Endothelial cell of umbilical vein (primary cell): ENCODE measurements at regions of chr14 and their contacts with region 1.

Region 1: DNA sequence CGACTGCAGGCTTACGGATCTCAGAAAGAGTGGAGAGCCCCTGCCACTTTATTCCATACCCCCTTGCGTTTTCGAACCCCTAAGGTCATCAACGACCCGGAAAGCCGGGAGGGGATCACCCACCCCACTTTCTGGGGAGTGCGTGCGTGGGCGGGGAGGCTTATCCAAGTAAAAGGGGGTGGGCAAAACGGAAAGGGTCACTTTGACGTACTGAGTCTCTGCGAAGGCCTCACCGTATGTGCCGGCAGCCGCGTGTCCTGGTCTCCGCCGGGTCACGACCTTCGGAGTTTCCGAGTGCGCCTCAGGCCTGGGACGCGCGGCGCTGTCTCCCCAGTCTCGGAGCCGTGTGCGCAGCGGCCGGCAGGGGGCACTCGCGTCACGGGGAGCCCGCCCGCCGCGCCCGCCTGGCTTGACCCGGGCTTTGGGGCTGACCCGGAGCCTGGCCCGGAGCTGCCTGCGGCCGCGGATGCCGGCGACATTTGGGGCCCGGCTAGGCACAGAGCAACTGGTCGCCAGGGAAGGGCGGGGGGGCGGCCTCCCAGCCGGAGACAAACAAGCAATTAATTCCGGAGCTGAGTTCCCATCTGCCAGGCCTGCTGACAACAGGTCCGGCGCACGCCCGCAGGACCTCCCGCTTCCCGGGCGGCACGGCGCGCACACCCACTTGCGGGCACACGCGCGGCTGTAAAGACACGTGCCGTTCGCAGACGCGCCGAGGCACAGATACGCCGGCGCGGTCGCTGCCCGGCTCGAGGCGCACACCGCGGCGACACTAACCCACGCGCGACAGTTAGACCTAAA is 890 bp upstream of the KIF26A start:
- DNase-seq: peak; percentile 51
- H3K4me3 ChIP-seq: peak overlapping the region; percentile 48 to 87 (median 61)
- H3K27ac ChIP-seq: no peak overlapping the region
- H3K4me1 ChIP-seq: peaks cover 21% of the 10 kb centered on the region
- H3K27me3 ChIP-seq: peaks cover 21 to 23% of the 10 kb centered on the region in 2 experiments
- CTCF ChIP-seq: peak; percentile 79 to 84
- POLR2A ChIP-seq: no peak

Region 2: GRCh38 chr14:103905842-103906456 is 231.5 kb before region 1 on chr14:
- CTCF ChIA-PET with region 1: no interaction called
- POLR2A ChIA-PET with region 1: no interaction called
- dilution Hi-C with region 1: no loop called
- intact Hi-C with region 1: no loop called
- DNase-seq: peak; percentile 15
- H3K4me3 ChIP-seq: no peak overlapping the region
- H3K27ac ChIP-seq: no peak overlapping the region
- H3K4me1 ChIP-seq: peaks cover 9% of the 10 kb centered on the region
- H3K27me3 ChIP-seq: no peaks in the 10 kb centered on the region
- CTCF ChIP-seq: peak; percentile 30 to 60
- POLR2A ChIP-seq: no peak

Region 3: DNA sequence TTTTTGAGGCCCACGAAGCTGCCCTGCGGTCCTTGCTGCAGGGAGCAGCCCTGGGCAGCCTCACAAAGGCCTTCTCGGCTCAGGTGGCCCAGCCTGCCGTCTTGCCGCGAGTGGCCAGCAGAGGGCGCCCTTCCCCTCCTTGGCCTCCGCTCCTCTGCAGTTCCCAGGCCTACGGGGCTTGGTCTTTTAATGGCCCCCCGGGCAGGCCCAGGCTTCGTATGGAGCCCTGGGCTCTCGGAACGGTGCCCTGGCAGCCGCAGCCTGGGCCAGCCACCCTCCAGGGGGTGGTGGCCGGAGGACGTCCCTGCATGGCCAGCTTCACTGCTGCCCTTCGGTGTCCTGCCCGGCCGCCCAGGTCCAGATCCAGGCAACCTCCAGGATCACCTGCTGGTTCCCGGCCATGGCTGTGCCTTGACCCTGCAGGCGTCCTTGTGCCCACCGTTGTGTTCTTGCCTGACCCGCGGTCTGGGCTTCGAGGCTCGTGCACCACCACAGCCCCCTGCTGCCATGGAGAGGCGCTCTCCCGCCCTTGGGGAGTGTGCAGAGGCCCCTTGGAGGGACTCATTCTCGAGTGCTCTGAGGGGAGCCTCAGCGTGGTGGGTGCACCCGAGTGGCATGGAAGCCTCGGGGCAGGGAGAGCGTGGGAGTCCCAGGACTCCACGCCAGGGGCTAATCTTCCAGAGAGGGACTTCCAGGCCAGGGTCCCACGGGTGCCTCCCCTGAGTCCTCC is 42.6 kb before region 1 on chr14:
- CTCF ChIA-PET with region 1: no interaction called
- POLR2A ChIA-PET with region 1: no interaction called
- dilution Hi-C with region 1: no loop called
- intact Hi-C with region 1: loop called (anchors 1 kb)
- DNase-seq: peak; percentile 46
- H3K4me3 ChIP-seq: no peak overlapping the region
- H3K27ac ChIP-seq: no peak overlapping the region
- H3K4me1 ChIP-seq: no peaks in the 10 kb centered on the region
- H3K27me3 ChIP-seq: no peaks in the 10 kb centered on the region
- CTCF ChIP-seq: peak; percentile 85 to 97
- POLR2A ChIP-seq: no peak

Region 4: DNA sequence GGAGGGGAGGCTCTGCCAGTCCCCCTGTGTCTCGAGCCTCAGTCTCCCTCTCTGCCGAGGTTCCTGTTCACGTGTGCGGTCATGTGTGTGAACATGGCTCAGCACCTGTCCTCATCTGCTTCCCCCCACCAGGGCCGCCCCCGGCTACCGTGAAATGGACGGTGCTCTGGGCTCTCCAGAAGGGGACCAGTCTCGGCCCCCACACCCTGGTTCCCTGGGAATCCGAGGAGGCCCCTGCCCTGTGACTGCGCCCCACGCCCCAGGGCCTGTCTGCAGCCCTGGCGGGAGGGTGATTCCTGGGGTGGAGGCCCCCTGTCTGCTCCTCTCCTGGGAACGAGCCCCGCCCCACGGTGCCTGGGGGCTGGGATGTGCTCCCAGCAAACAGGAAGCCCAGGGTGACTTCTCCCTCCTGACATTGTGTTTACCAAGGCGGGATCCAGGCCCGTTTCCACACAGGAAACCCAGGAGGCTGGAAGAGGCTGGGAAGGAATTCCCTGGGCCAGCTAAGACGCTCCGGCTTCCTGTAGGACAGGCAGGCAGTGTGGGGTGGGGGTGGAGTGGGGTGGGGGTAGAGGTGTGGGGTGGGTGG is 47.5 kb after region 1 on chr14:
- CTCF ChIA-PET with region 1: interaction called, 9 read pairs
- POLR2A ChIA-PET with region 1: no interaction called
- dilution Hi-C with region 1: no loop called
- intact Hi-C with region 1: loop called (anchors 1 kb)
- DNase-seq: peak; percentile 86
- H3K4me3 ChIP-seq: no peak overlapping the region
- H3K27ac ChIP-seq: peak overlapping the region; percentile 85
- H3K4me1 ChIP-seq: peaks cover 11% of the 10 kb centered on the region
- H3K27me3 ChIP-seq: no peaks in the 10 kb centered on the region
- CTCF ChIP-seq: no peak
- POLR2A ChIP-seq: no peak

Region 5: GRCh38 chr14:104262515-104263514 is 125.3 kb after region 1 on chr14:
- CTCF ChIA-PET with region 1: no interaction called
- POLR2A ChIA-PET with region 1: no interaction called
- dilution Hi-C with region 1: no loop called
- intact Hi-C with region 1: no loop called
- DNase-seq: no peak
- H3K4me3 ChIP-seq: no peak overlapping the region
- H3K27ac ChIP-seq: no peak overlapping the region
- H3K4me1 ChIP-seq: peaks cover under 1% of the 10 kb centered on the region
- H3K27me3 ChIP-seq: peaks cover 6 to 12% of the 10 kb centered on the region in 2 experiments
- CTCF ChIP-seq: no peak
- POLR2A ChIP-seq: no peak

Region 6: DNA sequence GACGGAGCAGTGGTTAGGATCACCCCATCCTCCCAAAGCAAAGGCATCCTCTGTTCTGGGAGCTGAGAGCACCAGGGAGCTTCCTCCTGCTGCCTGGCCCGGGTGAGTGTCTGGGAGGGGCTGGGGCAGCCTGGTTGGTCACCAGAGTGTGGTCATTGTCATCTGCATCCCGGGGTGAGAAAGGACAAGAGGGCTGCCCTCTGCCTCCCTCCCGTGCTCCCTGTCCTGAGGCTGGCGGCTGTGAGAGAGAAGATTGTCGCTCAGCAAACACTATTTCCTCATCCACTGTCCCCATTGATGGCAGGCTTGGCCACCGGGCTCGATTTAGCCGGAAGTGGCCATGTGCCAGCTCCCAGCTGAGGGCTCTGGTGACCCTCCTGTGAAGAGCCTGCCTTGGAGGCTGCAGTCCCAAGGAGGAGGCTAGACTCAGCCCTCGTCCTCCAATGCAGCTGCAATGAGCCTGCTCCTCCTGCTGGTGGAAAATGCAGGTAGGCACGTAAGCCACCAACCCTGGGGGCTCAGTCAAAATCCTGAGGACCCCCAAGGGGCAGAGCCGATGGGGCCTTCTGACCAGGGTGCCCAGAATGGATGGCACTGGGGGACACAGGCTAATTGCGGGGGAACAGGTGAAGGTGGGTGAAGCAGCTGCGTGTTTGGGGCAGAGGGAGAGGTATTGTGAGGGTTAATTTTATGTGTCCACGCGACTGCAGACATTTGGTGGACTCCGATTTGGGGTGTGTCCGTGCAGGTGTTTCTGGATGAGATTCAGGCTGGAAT is 156.5 kb after region 1 on chr14:
- CTCF ChIA-PET with region 1: interaction called, 15 read pairs
- POLR2A ChIA-PET with region 1: no interaction called
- dilution Hi-C with region 1: no loop called
- intact Hi-C with region 1: loop called (anchors 1 kb)
- DNase-seq: no peak
- H3K4me3 ChIP-seq: no peak overlapping the region
- H3K27ac ChIP-seq: no peak overlapping the region
- H3K4me1 ChIP-seq: peaks cover 2% of the 10 kb centered on the region
- H3K27me3 ChIP-seq: no peaks in the 10 kb centered on the region
- CTCF ChIP-seq: peak in 1 of 2 donors; percentile 33
- POLR2A ChIP-seq: no peak

Region 7: GRCh38 chr14:104436047-104436591 is 298.6 kb after region 1 on chr14:
- CTCF ChIA-PET with region 1: interaction called, 5 read pairs
- POLR2A ChIA-PET with region 1: no interaction called
- dilution Hi-C with region 1: no loop called
- intact Hi-C with region 1: loop called (anchors 2 kb)
- DNase-seq: peak; percentile 96
- H3K4me3 ChIP-seq: no peak overlapping the region
- H3K27ac ChIP-seq: peak overlapping the region; percentile 89
- H3K4me1 ChIP-seq: peaks cover 16% of the 10 kb centered on the region
- H3K27me3 ChIP-seq: no peaks in the 10 kb centered on the region
- CTCF ChIP-seq: no peak
- POLR2A ChIP-seq: peak; percentile 20

Region 8: DNA sequence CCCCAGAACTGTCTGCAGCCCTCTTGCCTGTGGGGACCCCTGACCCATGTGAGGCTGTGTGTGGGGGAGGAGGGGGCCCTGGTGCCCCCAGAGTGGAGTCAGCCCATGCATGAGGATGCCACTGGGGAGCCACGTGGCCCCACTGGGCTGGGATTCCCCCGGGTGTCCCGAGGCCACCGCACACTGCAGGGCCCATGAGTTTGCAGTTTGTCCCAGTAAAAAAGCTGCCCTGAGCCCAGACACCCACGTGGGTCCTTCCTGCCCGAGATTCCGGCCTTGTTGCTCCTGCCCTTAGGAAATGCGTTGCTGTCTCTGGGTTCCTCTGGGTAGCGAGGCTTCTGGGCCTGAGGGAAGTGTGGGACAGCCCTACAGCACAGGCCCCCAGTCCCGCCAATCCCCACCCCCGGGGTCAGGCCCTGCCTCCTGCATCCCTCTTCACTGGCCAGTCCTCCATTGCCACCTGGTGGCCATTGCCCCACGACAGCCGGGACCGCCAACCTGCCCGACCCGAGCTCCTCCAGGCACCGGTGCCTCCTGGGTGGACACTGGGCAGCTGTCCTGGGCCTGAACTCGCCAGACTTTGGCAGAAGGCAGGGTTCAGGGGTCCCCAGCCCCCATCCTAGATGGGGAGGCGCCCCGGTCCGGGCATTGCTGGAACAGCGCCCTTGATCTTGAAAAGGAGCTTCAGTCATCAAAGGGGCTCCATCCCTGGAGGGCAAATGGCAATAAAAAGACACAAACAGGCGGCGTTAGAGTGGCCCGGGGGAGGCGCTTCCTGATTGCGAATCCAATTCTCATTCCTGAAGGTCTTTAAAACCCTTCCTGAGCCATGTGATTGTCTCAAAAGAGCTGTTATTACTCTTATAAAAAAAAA is 426.5 kb after region 1 on chr14:
- CTCF ChIA-PET with region 1: interaction called, 132 read pairs
- POLR2A ChIA-PET with region 1: no interaction called
- dilution Hi-C with region 1: no loop called
- intact Hi-C with region 1: no loop called
- DNase-seq: peak; percentile 62
- H3K4me3 ChIP-seq: no peak overlapping the region
- H3K27ac ChIP-seq: no peak overlapping the region
- H3K4me1 ChIP-seq: no peaks in the 10 kb centered on the region
- H3K27me3 ChIP-seq: no peaks in the 10 kb centered on the region
- CTCF ChIP-seq: peak; percentile 80 to 86
- POLR2A ChIP-seq: no peak